H1 (cell line): ENCODE measurements at regions of chr9 and their contacts with region 1.

Region 1: DNA sequence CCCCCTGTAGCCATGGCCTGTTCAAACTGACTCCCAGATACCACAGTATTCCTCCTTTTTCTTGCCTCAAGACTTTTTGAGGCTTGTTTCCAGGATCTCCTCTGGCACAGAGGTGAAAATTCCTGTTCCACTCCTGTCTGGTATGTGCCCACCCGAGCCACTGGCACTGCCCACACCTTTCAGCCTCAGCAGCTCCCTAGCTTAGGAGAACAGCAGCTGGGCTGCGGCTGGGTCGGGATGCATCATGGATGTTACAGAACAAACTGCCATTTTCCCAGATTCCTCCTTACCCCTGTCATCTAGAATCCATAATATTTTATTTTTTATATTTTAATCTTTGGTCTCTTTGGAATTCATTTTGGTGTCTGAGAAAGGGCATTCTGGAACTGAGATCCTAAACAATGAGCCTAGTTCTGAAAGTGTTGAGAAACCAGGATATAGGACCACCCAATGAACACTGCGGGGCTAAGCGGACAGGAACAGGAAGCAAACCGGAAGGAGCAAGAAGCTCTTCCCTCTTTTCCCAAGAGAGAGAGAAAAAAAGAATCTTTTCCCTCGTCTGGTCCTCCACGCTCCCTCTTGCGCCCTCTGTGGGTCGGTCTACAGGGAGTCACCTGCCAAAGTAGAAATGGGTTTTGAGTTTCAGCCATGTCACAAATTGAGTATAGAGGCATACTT is 12.5 kb downstream of the OR2S2 start:
- DNase-seq: peak; percentile 43 to 87
- H3K4me3 ChIP-seq: peak overlapping the region in 1 of 4 experiments; percentile 43; a peak in 3 of 8 replicates
- H3K27ac ChIP-seq: no peak overlapping the region
- H3K4me1 ChIP-seq: peaks cover 0 to 5% (median under 1%) of the 10 kb centered on the region in 4 experiments; a peak in 2 of 7 replicates
- H3K27me3 ChIP-seq: peaks cover 7 to 40% (median 28%) of the 10 kb centered on the region in 4 experiments
- CTCF ChIP-seq: peak; percentile 74 to 90 (median 84)
- EP300 ChIP-seq: no peak
- POLR2A ChIP-seq: no peak
- RAD21 ChIP-seq: peak; percentile 52 to 67

Region 2: DNA sequence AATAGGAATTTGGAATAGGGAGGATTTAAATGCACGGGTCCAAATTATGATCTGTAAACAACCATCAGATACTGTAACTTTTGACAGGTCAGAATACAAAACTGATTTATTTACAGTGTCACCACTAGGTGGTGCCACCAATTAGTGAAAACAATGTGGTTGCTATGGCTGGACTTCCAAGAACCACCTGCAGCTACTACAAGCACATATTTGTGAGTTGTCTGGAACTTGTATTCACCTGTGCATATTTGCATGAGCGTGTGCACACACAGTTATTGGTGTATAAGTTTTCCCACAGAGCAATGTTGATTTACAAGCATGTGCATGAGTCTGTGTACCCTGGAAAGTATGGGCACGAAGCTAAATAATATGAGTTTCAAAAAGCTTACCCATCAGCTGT is 42.4 kb before region 1 on chr9:
- CTCF ChIA-PET with region 1: interaction called, 29 read pairs
- POLR2A ChIA-PET with region 1: interaction called, 4 read pairs
- DNase-seq: no peak
- H3K4me3 ChIP-seq: no peak overlapping the region
- H3K27ac ChIP-seq: no peak overlapping the region
- H3K4me1 ChIP-seq: peaks cover 0 to 14% (median 10%) of the 10 kb centered on the region in 4 experiments; a peak in 6 of 7 replicates
- H3K27me3 ChIP-seq: 0 out of 7 replicates have a peak, but pooled peaks cover 0 to 2% (median 0%) of the 10 kb centered on the region in 4 experiments
- CTCF ChIP-seq: peak in 2 of 3 experiments; percentile 69 to 70; a peak in 3 of 4 replicates
- EP300 ChIP-seq: no peak
- POLR2A ChIP-seq: no peak
- RAD21 ChIP-seq: peak; percentile 68 to 72

Region 3: DNA sequence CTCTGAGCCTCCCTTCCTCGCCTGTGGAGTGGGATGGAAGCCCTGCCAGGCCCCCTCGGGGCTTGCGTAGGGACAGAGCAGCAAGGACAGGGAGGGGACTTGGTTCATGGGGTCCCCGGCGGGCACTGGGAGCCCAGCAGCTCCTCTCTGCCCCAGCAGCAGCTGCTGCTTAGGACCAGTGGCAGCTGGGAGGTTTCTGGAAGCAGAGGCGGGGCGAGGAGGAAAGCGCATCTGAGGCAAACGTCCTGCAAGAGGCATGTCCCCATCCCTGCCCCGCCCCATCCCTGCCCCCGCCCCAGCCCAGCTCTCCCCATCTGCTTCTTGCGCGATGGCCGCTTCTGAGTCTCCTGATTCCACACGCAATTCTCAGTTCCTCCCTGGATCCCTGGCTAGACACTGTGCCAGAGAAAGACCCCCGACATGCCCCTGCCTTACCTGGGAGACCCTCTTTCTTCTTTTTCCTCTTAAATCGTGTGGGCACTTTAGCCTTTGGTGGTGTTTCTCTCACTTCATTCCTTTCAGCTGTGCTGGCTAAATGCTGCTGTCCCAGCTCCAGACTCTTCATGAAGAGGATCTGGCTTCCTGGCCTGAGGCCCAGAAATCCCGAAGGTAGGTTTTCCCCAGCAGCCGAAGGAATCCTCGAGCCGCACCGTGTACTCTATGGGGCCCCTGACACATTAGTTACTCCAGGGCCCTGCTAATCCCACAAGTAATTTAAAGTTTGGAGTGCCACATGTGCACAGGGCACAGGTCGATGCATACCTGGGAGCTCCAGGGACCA is 16.8 kb after region 1 on chr9:
- CTCF ChIA-PET with region 1: interaction called, 23 read pairs
- POLR2A ChIA-PET with region 1: no interaction called
- DNase-seq: peak in 1 of 2 experiments; percentile 55
- H3K4me3 ChIP-seq: no peak overlapping the region
- H3K27ac ChIP-seq: no peak overlapping the region
- H3K4me1 ChIP-seq: peaks cover 0 to 3% (median 1%) of the 10 kb centered on the region in 4 experiments; a peak in 3 of 7 replicates
- H3K27me3 ChIP-seq: no peaks in the 10 kb centered on the region; a peak in 1 of 7 replicates
- CTCF ChIP-seq: no peak
- EP300 ChIP-seq: no peak
- POLR2A ChIP-seq: no peak
- RAD21 ChIP-seq: no peak

Region 4: GRCh38 chr9:36074870-36075532 is 129.5 kb after region 1 on chr9:
- CTCF ChIA-PET with region 1: no interaction called
- POLR2A ChIA-PET with region 1: no interaction called
- DNase-seq: no peak
- H3K4me3 ChIP-seq: no peak overlapping the region
- H3K27ac ChIP-seq: no peak overlapping the region
- H3K4me1 ChIP-seq: no peaks in the 10 kb centered on the region
- H3K27me3 ChIP-seq: no peaks in the 10 kb centered on the region
- CTCF ChIP-seq: no peak
- EP300 ChIP-seq: no peak
- POLR2A ChIP-seq: no peak
- RAD21 ChIP-seq: no peak